ENCODE measurements at regions of chr14 and their contacts with region 1.

Region 1: DNA sequence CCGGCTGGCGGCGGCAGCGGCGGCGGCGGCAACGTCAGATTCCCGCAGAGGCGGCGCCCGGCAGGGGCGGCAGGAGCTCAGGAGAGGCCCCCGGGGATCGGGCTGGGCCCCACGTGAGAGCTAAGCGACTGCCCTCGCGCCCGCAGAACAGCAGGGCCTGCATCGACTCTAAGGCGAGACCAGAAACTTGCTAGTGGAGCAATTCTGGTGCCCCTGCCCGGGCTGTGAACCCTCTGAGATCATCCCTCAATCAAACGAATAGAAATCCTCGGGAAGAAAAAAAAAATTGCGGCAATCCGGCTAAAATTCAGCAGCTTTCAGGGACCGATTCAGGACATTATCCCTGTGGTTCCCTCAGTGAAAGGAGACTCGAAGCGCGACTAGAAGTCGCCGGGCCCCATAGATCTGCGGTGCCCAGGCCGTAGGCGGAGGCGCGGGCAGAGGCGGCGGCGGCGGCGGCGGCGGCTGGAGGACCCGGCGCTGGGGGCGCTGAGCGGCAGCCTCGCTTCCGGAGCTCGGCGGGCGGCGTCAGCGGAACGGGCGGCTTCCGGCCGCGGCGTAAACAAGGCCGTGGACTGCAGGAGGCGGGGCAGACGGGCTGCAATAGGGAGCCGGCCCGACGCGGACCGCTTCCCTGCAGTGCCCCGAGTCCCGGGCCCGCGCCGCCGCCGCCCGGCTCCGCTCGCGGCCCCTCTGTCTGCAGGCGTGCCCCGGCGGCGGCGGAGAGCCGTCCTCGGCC is at the start of gene KLHDC2:
- DNase-seq: peak; percentile 94
- ATAC-seq: peak; percentile 74
- H3K4me3 ChIP-seq: peak within 1 kb of the TSS; percentile 94
- H3K27ac ChIP-seq: peak within 1 kb of the TSS; percentile 84
- H3K4me1 ChIP-seq: peaks cover 33% of the 10 kb centered on the region
- H3K27me3 ChIP-seq: no peaks in the 10 kb centered on the region
- CTCF ChIP-seq: peak; percentile 63; the same call in 1 of the 2 replicates
- total RNA-seq, gene KLHDC2: 123 and 126 TPM in 2 replicates

Region 2: GRCh38 chr14:49574038-49574437 is 193.7 kb before region 1 on chr14:
- CTCF ChIA-PET with region 1: interaction called, 16 read pairs
- POLR2A ChIA-PET with region 1: no interaction called
- intact Hi-C with region 1: no loop called
- DNase-seq: no peak
- ATAC-seq: no peak
- H3K4me3 ChIP-seq: no peak overlapping the region
- H3K27ac ChIP-seq: no peak overlapping the region
- H3K4me1 ChIP-seq: no peaks in the 10 kb centered on the region
- H3K27me3 ChIP-seq: no peaks in the 10 kb centered on the region
- CTCF ChIP-seq: no peak

Region 3: DNA sequence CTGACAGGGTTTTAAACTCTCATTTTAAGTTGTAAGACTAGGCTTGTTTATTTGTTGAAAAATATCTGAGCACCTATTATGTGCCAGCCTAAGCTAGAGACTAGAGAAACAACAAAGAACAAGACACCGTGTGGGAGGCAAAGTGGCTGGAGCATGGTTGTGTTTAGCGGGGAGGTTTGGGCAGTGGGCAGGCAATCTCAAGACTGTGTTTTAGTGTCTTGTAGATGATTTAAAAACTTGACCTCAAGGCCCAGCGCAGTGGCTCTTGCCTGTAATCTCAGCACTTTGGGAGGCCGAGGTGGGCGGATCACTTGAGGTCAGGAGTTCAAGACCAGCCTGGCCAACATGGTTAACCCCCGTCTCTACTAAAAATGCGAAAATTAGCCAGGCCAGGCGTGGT is 155.1 kb before region 1 on chr14:
- CTCF ChIA-PET with region 1: no interaction called
- POLR2A ChIA-PET with region 1: interaction called, 13 read pairs
- intact Hi-C with region 1: no loop called
- DNase-seq: no peak
- ATAC-seq: no peak
- H3K4me3 ChIP-seq: no peak overlapping the region
- H3K27ac ChIP-seq: no peak overlapping the region
- H3K4me1 ChIP-seq: peaks cover 3% of the 10 kb centered on the region
- H3K27me3 ChIP-seq: no peaks in the 10 kb centered on the region
- CTCF ChIP-seq: no peak

Region 4: DNA sequence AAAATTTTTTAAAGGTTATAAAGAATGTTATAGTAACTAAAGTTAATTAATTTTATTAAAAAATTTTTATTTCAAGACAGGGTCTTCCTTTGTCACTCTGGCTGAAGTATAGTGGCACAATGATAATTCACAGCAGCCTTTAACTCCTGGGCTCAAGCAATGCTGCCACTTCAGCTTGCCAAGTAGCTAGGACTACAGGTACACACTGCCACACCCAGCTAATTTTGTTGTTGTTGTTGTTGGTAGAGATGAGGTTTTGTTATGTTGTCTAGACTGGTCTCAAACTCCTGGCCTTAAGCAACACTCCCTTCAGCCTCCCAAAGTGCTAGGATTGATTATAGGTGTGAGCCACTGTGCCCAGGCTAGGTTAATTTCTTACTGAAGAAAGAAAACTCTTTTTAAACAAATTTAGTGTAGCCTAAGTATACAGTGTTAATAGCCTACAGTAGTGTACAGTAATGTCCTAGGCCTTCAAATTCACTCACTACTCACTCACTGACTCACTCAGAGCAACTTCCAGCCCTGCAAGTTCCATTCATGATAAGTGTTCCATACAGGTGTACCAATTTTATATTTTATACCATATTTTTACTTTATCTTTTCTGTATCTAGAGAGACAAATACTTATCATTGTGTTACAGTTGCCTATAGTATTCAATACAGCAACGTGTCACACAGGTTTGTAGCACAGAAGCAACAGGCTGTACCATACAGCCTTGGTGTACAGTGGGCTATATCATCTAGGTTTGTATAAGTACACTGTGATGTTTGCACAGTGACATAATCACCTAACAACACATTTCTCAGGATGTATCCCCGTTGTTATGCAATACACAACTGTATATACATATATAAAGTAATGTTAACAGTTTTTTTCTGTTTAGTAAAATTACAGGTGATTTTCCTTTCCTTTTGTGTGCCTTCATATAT is 107.9 kb before region 1 on chr14:
- CTCF ChIA-PET with region 1: no interaction called
- POLR2A ChIA-PET with region 1: interaction called, 11 read pairs
- intact Hi-C with region 1: no loop called
- DNase-seq: peak; percentile 92
- ATAC-seq: peak; percentile 92
- H3K4me3 ChIP-seq: 0 out of 2 replicates have a peak overlapping the region, but pooled peaks have one; percentile 19
- H3K27ac ChIP-seq: peak overlapping the region; percentile 94
- H3K4me1 ChIP-seq: peaks cover 43% of the 10 kb centered on the region
- H3K27me3 ChIP-seq: no peaks in the 10 kb centered on the region
- CTCF ChIP-seq: no peak

Region 5: GRCh38 chr14:49703965-49704364 is 63.8 kb before region 1 on chr14:
- CTCF ChIA-PET with region 1: interaction called, 4 read pairs
- POLR2A ChIA-PET with region 1: interaction called, 15 read pairs
- intact Hi-C with region 1: no loop called
- DNase-seq: no peak
- ATAC-seq: no peak
- H3K4me3 ChIP-seq: no peak overlapping the region
- H3K27ac ChIP-seq: no peak overlapping the region
- H3K4me1 ChIP-seq: no peaks in the 10 kb centered on the region
- H3K27me3 ChIP-seq: no peaks in the 10 kb centered on the region
- CTCF ChIP-seq: no peak

Region 6: GRCh38 chr14:49852301-49853157 is 84.8 kb after region 1 on chr14 and contains the start of gene NEMF:
- CTCF ChIA-PET with region 1: interaction called, 4 read pairs
- POLR2A ChIA-PET with region 1: interaction called, 10 read pairs
- intact Hi-C with region 1: no loop called
- DNase-seq: peak; percentile 95
- ATAC-seq: peak; percentile 66
- H3K4me3 ChIP-seq: peak within 1 kb of the TSS; percentile 87
- H3K27ac ChIP-seq: peak within 1 kb of the TSS; percentile 31
- H3K4me1 ChIP-seq: peaks cover 32% of the 10 kb centered on the region
- H3K27me3 ChIP-seq: no peaks in the 10 kb centered on the region
- CTCF ChIP-seq: peak; percentile 98
- total RNA-seq, gene NEMF: 52.9 and 54.0 TPM in 2 replicates